ENCODE measurements at regions of chr14 and their contacts with region 1.

Region 1: GRCh38 chr14:86865934-86866333 is 1127.0 kb downstream of the GALC start:
- DNase-seq: no peak
- ATAC-seq: no peak
- H3K4me3 ChIP-seq: no peak overlapping the region
- H3K27ac ChIP-seq: no peak overlapping the region
- H3K4me1 ChIP-seq: no peaks in the 10 kb centered on the region
- H3K27me3 ChIP-seq: no peaks in the 10 kb centered on the region
- CTCF ChIP-seq: no peak

Region 2: DNA sequence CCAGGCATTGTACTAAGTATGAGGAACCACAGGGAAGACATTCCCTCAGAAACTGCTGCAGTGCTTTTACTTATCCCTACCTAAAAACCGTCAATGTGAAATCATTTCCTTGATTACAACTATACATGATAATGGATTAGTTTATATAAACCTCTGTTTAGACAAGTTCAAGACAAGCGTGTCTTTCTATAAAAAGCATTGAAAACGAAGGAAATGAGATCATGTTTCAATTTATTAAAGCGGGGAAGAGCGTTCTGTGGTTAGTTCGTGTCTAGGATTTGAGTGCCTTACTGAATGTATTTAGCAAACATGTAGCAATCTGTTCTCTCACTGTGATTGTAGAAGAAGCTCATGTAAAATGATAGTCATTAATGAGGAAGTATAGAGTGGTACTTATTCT is 1089.6 kb after region 1 on chr14:
- intact Hi-C with region 1: loop called in 1 of 2 experiments (anchors 5 kb)
- DNase-seq: no peak
- ATAC-seq: no peak
- H3K4me3 ChIP-seq: no peak overlapping the region
- H3K27ac ChIP-seq: no peak overlapping the region
- H3K4me1 ChIP-seq: no peaks in the 10 kb centered on the region
- H3K27me3 ChIP-seq: no peaks in the 10 kb centered on the region
- CTCF ChIP-seq: no peak

Measured in psoas muscle (tissue), 8 donors.